MCF 10A (cell line): ENCODE measurements at regions of chr9 and their contacts with region 1.

Region 1: DNA sequence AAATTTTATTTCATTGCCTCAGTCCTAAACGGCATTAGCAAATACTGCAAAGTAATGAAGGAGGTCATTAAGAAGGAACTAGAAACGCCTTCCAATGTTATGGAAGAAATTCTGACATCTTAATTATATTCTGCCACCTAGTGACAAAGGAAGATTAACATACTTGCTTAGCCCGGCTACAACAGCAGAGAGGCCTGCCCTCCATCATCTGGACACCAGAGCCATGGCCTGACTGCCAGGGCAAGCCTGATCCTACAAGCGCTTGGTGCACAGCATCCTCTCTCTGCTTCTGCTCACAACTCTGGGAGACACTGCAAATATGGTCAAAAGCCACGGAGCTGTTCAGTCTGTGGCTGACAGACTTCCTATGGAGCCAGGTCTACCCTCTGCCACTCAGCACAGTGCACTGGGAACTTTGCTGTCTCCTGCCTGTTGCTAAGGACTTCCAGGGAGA is 87.3 kb upstream of the SLC44A1 start:
- DNase-seq: peak; percentile 67
- H3K4me3 Mint-ChIP-seq: no peak overlapping the region
- H3K27ac Mint-ChIP-seq: no peak overlapping the region
- H3K4me1 Mint-ChIP-seq: peaks cover 9% of the 10 kb centered on the region
- H3K27me3 Mint-ChIP-seq: no peaks in the 10 kb centered on the region
- CTCF ChIP-seq: peak; percentile 51

Region 2: GRCh38 chr9:104808035-104808614 is 349.0 kb before region 1 on chr9:
- CTCF ChIA-PET with region 1: interaction called, 3 read pairs
- POLR2A ChIA-PET with region 1: no interaction called
- intact Hi-C with region 1: loop called (anchors 1 kb)
- DNase-seq: peak; percentile 63
- H3K4me3 Mint-ChIP-seq: no peak overlapping the region
- H3K27ac Mint-ChIP-seq: no peak overlapping the region
- H3K4me1 Mint-ChIP-seq: peaks cover 19% of the 10 kb centered on the region
- H3K27me3 Mint-ChIP-seq: no peaks in the 10 kb centered on the region
- CTCF ChIP-seq: peak; percentile 19

Region 3: DNA sequence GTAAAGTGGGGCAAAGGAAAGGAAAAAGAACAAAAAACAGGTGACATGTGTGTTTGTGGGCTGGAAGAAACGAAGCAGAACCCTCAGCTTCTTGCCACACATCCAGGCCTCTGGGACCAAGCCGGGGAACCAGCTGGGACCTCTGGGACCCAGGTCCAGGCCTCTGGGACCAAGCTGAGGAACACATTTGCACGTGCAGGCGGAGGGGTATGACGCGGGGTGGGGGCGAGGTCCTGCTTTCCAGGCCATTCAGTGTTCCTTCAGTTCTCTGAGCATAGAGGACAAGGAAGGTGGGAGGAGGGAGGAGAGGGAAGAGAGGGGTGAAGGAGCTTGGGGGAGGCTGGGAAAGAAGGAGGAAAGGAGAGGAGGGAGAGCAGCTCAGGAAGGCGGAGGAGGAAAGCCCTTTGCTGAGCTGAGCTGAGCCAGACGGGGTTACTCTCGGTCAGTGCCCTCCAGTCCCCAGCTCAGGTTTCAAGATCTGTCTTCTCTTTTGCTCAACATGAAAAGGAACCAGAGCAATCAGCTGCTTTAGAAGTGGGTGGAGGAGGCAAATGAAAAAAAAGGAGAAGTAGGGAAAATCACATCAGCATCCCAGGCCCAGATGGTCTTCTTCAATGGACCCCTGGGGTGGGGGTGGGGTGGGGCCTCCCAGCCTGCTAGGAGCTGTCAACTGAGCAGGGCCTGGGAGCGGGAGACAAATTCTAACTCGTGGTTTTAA is 288.3 kb before region 1 on chr9:
- CTCF ChIA-PET with region 1: interaction called, 115 read pairs
- POLR2A ChIA-PET with region 1: interaction called, 3 read pairs
- intact Hi-C with region 1: no loop called
- DNase-seq: peak; percentile 82
- H3K4me3 Mint-ChIP-seq: no peak overlapping the region
- H3K27ac Mint-ChIP-seq: no peak overlapping the region
- H3K4me1 Mint-ChIP-seq: peaks cover 41% of the 10 kb centered on the region
- H3K27me3 Mint-ChIP-seq: no peaks in the 10 kb centered on the region
- CTCF ChIP-seq: no peak

Region 4: DNA sequence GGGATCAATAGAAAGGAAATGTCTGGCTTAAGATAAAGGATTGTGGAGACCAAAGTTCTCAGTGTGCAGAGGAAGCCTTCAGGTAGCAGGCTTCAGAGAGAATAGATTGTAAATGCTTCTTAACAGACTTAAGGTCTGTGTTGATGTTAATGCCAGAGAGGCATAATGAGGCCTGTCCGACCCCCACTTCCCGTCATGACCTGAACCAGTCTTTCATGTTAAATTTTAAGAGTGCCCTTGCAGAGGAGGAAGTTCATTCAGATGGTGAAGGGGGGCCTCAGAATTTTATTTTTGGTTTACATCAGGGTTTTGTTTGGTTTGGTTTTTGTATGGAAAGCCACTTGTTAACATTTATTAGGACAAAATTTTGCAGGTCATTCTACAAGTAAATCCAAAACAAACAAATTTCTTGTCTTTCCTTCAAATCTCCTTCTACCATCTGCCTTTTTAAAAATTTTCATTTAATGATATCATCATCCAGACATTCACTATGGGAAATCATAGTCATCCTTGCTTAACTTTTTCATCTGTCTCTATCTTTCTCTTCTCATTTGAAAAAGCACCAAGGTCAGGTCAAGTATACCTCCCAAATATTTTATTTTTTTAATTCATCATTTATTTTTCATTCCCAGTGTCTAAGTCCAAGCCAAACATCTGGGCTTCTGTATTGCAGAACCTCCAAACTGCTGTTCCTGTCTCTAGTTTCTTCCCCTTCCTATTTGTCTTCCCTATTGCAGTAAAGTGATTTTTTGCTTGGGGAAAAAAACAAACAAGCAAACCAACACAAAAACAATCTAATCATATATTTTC is 222.3 kb before region 1 on chr9:
- CTCF ChIA-PET with region 1: no interaction called
- POLR2A ChIA-PET with region 1: no interaction called
- intact Hi-C with region 1: loop called (anchors 2 kb)
- DNase-seq: no peak
- H3K4me3 Mint-ChIP-seq: no peak overlapping the region
- H3K27ac Mint-ChIP-seq: no peak overlapping the region
- H3K4me1 Mint-ChIP-seq: no peaks in the 10 kb centered on the region
- H3K27me3 Mint-ChIP-seq: no peaks in the 10 kb centered on the region
- CTCF ChIP-seq: no peak

Region 5: DNA sequence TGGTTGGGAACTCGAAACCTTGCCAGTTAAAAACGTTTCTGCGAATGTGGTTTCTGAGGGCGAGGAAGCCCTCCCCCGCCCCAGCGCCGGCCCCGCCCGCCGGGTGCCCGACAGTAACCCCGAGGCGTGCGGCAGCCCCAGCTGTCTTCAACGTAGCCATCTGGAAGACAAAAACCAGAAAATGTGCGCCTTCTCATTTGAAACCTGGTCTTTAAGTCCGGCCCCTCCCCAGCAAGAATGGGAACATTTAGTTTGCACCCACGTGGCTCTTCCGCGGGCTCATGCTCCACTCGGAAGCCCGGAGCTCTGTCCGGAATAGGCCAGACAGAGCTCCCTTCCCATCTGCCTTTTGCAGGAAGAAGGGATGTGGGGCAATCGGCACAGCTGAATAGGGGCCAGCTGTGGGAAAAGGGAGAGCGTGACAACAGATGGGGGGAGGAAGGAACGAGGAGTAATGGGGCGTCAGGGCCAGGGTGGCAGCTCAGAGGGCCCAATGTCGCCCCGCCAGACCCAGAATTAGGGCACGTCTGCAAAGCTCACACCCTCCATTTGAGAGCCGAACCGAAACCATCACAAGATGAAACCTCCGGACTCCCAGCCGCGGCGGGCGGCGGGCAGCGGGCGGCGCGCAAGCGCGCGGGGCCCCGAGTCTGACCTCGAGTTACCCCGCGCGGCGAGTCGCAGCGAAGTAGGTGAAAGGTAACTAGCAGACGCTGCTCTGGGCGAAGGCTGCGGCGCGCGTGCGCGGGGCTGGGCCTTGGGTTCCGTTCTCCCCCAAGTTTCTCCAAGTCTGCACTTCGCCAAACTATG is 165.8 kb before region 1 on chr9:
- CTCF ChIA-PET with region 1: interaction called, 4 read pairs
- POLR2A ChIA-PET with region 1: interaction called, 4 read pairs
- intact Hi-C with region 1: loop called (anchors 10 kb)
- DNase-seq: peak; percentile 81
- H3K4me3 Mint-ChIP-seq: peak overlapping the region; percentile 89
- H3K27ac Mint-ChIP-seq: peak overlapping the region; percentile 91
- H3K4me1 Mint-ChIP-seq: peaks cover 24% of the 10 kb centered on the region
- H3K27me3 Mint-ChIP-seq: no peaks in the 10 kb centered on the region
- CTCF ChIP-seq: no peak

Region 6: DNA sequence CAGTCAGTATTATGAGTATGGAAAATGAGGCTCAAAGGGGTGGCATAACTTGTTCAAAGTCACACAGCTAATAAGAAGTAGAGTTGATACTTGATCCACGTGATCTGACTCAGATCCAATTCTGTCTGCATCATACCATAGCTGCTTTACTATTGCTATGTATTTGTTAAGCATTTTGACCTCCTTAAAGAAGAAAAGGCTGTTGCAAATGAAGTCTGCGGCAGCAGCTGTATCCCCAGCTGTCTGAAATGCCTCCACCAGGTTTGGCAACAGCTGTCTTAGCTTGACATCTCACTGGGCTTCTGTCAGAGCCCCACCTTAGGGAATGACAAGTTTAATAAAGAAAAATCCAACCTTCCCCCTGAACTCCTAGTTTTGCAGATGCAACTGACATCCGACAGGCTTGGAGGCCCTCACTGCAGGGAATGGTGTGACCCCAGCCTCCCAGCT is 11.7 kb after region 1 on chr9:
- CTCF ChIA-PET with region 1: interaction called, 14 read pairs
- POLR2A ChIA-PET with region 1: no interaction called
- intact Hi-C with region 1: no loop called
- DNase-seq: no peak
- H3K4me3 Mint-ChIP-seq: no peak overlapping the region
- H3K27ac Mint-ChIP-seq: no peak overlapping the region
- H3K4me1 Mint-ChIP-seq: peaks cover 7% of the 10 kb centered on the region
- H3K27me3 Mint-ChIP-seq: no peaks in the 10 kb centered on the region
- CTCF ChIP-seq: no peak

Region 7: GRCh38 chr9:105414947-105415661 is 257.9 kb after region 1 on chr9:
- CTCF ChIA-PET with region 1: interaction called, 197 read pairs
- POLR2A ChIA-PET with region 1: interaction called, 3 read pairs
- intact Hi-C with region 1: loop called (anchors 1 kb)
- DNase-seq: peak; percentile 73
- H3K4me3 Mint-ChIP-seq: no peak overlapping the region
- H3K27ac Mint-ChIP-seq: no peak overlapping the region
- H3K4me1 Mint-ChIP-seq: peaks cover 6% of the 10 kb centered on the region
- H3K27me3 Mint-ChIP-seq: no peaks in the 10 kb centered on the region
- CTCF ChIP-seq: peak; percentile 91